ENCODE measurements at regions of chr14 and their contacts with region 1.

Region 1: GRCh38 chr14:28608851-28609828 is 157.4 kb upstream of the FOXG1 start:
- DNase-seq: peak; percentile 55
- ATAC-seq: no peak
- H3K4me3 Mint-ChIP-seq: no peak overlapping the region
- H3K27ac Mint-ChIP-seq: no peak overlapping the region
- H3K4me1 Mint-ChIP-seq: no peaks in the 10 kb centered on the region
- H3K27me3 Mint-ChIP-seq: no peaks in the 10 kb centered on the region

Region 2: GRCh38 chr14:28217743-28218142 is 391.4 kb before region 1 on chr14:
- CTCF ChIA-PET with region 1: no interaction called
- POLR2A ChIA-PET with region 1: no interaction called
- intact Hi-C with region 1: no loop called
- DNase-seq: no peak
- ATAC-seq: no peak
- H3K4me3 Mint-ChIP-seq: no peak overlapping the region
- H3K27ac Mint-ChIP-seq: no peak overlapping the region
- H3K4me1 Mint-ChIP-seq: no peaks in the 10 kb centered on the region
- H3K27me3 Mint-ChIP-seq: no peaks in the 10 kb centered on the region

Region 3: GRCh38 chr14:28294834-28295440 is 314.2 kb before region 1 on chr14:
- CTCF ChIA-PET with region 1: no interaction called
- POLR2A ChIA-PET with region 1: no interaction called
- intact Hi-C with region 1: loop called in 1 of 2 experiments (anchors 10 kb)
- DNase-seq: no peak
- ATAC-seq: no peak
- H3K4me3 Mint-ChIP-seq: no peak overlapping the region
- H3K27ac Mint-ChIP-seq: no peak overlapping the region
- H3K4me1 Mint-ChIP-seq: no peaks in the 10 kb centered on the region
- H3K27me3 Mint-ChIP-seq: no peaks in the 10 kb centered on the region

Region 4: DNA sequence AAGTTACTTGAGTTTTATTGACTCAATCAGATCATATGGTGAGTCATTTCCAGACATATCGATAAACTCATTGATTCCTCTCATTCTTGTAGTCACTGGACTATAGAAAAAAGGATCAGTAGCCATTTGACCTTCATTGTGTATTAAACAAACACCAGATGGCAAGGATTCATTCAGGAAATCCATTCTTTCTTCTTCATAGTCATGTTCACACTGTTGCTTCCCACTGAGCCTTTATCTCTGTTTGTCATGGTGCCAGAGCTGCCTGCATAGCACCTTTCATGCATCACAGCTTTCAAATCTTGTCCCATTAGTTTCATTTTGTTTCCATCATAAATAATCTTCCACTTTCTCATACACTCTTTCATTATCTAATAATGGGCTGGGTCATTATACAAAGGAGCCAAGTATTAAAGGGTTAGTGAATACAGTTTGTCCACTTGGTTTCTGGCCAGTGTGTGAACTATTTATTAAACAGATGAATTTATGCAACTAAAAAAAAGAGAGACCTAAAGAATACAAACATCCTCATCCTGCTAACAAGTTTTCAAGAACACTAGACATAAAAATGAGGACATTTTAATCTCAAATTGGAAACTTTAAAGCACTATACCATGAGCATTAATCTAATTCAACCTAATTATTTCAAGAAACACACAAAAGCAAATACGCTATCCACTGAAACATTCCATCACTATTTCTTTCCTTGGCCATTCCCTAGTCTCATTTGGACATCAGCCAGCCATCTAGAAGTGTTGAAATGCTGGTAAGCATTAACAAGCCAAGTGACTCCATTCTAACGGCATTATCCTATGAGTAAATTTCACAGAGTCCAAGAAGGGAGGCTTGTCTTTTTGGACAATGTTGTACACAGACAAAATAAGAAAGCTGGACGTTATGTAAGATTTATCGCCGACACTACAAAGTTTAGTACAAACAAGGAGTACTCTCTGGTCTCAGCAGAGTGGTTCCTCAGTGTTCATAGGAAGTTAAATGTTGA is 633.9 kb after region 1 on chr14:
- CTCF ChIA-PET with region 1: no interaction called
- POLR2A ChIA-PET with region 1: no interaction called
- intact Hi-C with region 1: no loop called
- DNase-seq: no peak
- ATAC-seq: no peak
- H3K4me3 Mint-ChIP-seq: no peak overlapping the region
- H3K27ac Mint-ChIP-seq: no peak overlapping the region
- H3K4me1 Mint-ChIP-seq: no peaks in the 10 kb centered on the region
- H3K27me3 Mint-ChIP-seq: no peaks in the 10 kb centered on the region